CD4-positive, alpha-beta T cell (primary cell): ENCODE measurements at regions of chr1 and their contacts with region 1.

Region 1: DNA sequence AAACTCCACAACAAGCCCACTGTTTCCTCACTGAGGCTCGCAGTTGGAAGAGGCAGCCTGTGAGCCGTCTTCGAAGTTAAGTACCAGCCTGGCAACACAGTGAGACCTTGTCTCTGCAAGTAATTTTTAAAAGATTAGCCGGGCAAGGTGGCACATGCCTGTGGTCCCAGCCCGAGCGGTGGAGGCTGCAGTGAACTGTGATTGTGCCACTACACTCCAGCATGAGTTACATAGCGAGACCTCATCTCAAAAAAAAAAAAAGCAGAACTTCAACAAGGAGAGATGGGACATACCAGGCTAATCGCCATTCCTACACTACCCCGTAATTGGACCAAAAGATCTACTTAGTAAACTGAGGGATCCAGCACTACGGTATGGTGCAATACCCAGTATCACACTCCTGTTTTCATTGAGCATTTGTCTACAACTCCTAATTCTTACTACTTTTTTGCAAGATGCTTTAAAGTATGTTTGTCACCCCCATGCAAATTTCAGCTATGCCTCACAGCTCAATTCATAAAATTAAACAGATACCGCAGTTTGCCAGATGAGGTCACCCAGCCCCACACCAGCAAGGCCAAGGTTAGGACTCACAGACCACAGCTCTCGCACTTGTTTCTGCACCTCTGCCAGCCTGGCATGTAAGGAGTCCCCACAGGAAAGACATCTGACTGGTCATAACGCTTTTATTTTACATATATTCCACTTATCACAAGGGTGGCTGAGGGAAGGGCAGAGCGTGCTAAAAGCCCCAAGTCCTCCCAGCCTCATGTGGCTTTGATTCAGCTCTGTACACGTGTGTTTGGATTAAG is 21.0 kb downstream of the SDE2 start:
- DNase-seq: peak in 1 of 14 experiments; percentile 7
- ATAC-seq: no peak
- H3K4me3 ChIP-seq: no peak overlapping the region
- H3K4me3 Mint-ChIP-seq: no peak overlapping the region
- H3K27ac ChIP-seq: no peak overlapping the region
- H3K27ac Mint-ChIP-seq: no peak overlapping the region
- H3K4me1 ChIP-seq: peaks cover 5% of the 10 kb centered on the region
- H3K4me1 Mint-ChIP-seq: peaks cover 6% of the 10 kb centered on the region
- H3K27me3 ChIP-seq: no peaks in the 10 kb centered on the region
- H3K27me3 Mint-ChIP-seq: no peaks in the 10 kb centered on the region
- CTCF ChIP-seq: no peak

Region 2: DNA sequence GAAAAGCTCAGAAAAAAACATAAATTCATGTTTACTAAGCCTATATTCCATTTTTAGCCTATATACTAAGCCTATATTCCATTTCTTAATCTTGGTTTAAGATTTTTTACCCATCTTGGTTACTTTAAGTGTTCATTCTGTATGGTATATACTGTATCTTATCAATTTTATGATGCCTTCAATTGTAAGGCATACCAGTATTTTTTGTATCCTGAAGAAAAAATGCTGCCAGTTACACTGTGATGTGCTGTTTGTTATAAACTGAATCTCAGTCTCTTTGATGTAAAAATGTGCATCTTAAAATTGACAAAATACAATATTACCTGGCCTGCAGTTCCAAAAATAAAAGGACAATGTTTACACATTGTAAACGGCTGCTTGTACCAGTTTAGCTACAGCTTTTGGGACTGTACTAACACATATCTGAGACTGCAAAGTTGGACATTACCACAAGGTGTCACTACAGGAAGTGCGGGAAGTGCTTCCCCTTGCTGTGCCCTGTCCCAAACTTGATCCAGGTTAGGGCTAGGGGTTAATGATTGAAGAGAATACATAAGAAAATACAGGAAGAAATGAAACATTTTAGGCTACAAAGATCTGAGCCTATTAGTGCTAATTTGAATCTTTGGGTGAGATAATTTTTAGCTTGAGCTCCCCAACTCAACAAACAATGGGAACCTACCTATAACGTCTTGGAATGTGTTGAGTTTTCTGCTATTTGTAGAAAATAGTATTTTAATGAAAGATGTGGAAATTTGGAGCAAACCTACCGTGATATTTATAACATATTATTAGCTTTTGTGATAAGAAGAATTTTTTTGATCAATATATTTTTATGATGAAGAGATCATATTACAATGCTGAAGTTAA is 659.2 kb before region 1 on chr1:
- CTCF ChIA-PET with region 1: no interaction called
- POLR2A ChIA-PET with region 1: no interaction called
- intact Hi-C with region 1: loop called (anchors 2 to 5 kb)
- DNase-seq: peak in 4 of 14 experiments; percentile 25 to 55 (median 46)
- ATAC-seq: peak; percentile 43
- H3K4me3 ChIP-seq: no peak overlapping the region
- H3K4me3 Mint-ChIP-seq: no peak overlapping the region
- H3K27ac ChIP-seq: no peak overlapping the region
- H3K27ac Mint-ChIP-seq: no peak overlapping the region
- H3K4me1 ChIP-seq: no peaks in the 10 kb centered on the region
- H3K4me1 Mint-ChIP-seq: no peaks in the 10 kb centered on the region
- H3K27me3 ChIP-seq: peaks cover 0 to 6% of the 10 kb centered on the region in 2 experiments
- H3K27me3 Mint-ChIP-seq: no peaks in the 10 kb centered on the region
- CTCF ChIP-seq: peak; percentile 84

Region 3: GRCh38 chr1:225554216-225554812 is 423.8 kb before region 1 on chr1:
- CTCF ChIA-PET with region 1: no interaction called
- POLR2A ChIA-PET with region 1: no interaction called
- intact Hi-C with region 1: loop called (anchors 1 kb)
- DNase-seq: peak in 3 of 14 experiments; percentile 30 to 44 (median 34)
- ATAC-seq: no peak
- H3K4me3 ChIP-seq: no peak overlapping the region
- H3K4me3 Mint-ChIP-seq: no peak overlapping the region
- H3K27ac ChIP-seq: no peak overlapping the region
- H3K27ac Mint-ChIP-seq: no peak overlapping the region
- H3K4me1 ChIP-seq: no peaks in the 10 kb centered on the region
- H3K4me1 Mint-ChIP-seq: no peaks in the 10 kb centered on the region
- H3K27me3 ChIP-seq: peaks cover 0 to under 1% of the 10 kb centered on the region in 2 experiments
- H3K27me3 Mint-ChIP-seq: peaks cover 4% of the 10 kb centered on the region
- CTCF ChIP-seq: peak; percentile 67

Region 4: DNA sequence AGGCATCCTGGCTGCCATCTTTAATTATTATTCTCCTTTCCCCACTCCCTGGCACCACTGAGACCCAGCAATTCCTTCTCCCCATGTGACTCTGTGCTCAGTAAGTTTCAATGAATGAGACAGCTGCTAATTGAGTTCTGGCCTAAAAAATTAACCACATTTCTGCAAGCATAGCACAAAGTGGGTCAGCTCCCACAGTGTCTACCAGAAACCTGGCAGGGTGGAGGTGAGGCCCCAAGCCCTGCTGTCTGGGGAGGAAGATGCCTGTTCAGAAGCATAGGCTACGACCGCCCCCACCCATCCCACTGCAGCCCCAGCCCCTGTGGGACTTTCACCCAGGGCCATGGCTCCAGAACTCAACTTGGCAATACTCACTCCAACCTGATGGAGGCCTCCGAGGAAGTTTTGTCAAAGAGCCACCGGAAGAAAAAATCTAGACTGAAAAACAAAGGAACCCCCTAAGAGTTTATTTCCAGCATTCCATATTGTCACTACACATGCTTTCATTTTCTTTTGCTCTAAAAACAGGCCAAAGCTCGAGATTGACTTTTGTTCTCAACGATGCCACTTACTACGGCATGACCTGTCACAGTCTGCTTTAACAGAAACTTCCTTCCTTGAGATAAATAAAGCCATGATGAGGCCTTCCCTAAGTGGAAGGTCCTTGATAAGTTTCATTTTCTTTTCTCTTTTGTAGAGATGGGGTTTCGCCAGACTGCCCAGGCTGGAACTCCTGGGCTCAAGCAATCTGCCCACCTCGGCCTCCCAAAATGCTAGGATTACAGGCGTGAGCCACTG is 122.4 kb before region 1 on chr1:
- CTCF ChIA-PET with region 1: no interaction called
- POLR2A ChIA-PET with region 1: no interaction called
- intact Hi-C with region 1: loop called in 1 of 2 experiments (anchors 5 kb)
- DNase-seq: no peak
- ATAC-seq: peak; percentile 37
- H3K4me3 ChIP-seq: no peak overlapping the region
- H3K4me3 Mint-ChIP-seq: no peak overlapping the region
- H3K27ac ChIP-seq: peak overlapping the region in 1 of 2 donors; percentile 15
- H3K27ac Mint-ChIP-seq: peak overlapping the region; percentile 81
- H3K4me1 ChIP-seq: peaks cover 46% of the 10 kb centered on the region
- H3K4me1 Mint-ChIP-seq: peaks cover 27% of the 10 kb centered on the region
- H3K27me3 ChIP-seq: no peaks in the 10 kb centered on the region
- H3K27me3 Mint-ChIP-seq: no peaks in the 10 kb centered on the region
- CTCF ChIP-seq: no peak